ENCODE measurements at regions of chr1 and their contacts with region 1.

Region 1: DNA sequence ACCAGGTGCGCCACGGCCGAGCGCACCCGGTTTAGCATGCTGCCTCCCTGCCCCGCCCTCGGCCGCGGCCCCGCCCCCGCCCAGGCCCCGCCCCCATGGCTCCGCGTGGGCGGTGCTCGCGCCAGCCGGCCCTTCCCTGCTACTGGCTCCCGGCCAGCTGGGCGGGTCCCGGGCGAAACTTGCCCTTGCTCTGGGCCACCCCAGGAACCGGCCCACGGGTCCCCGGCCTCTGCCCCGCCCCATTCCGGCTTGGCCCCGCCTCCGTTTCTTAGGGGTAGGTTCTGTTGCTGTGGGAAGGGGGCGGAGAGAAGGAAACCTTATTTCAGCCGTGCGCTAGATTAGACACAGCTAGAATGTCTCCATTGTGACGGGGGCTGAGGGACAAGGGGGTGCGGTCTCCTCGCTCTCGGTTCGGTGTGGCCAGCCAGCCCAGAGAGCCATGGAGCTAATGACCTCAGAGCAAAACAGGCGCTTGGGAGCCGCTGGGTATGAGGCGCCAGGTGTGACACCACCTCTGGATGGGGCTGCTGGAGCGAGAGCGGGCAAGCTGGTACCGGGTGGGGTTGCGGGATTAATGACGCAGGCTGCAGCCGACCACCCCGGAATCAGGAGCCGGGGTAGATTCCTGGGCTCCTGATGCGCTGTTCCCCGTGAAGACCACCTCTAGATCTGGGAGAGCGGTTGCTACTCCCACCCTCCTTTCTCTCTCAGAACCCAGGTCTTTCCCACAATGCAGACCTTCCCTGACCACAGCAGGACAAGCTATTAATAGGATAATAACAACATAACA is at the start of gene PPM1J:
- DNase-seq: peak; percentile 97
- H3K4me3 ChIP-seq: peak within 1 kb of the TSS; percentile 40 to 45 (median 42)
- H3K27ac ChIP-seq: no peak within 1 kb of the TSS
- H3K4me1 ChIP-seq: peaks cover 11% of the 10 kb centered on the region
- H3K27me3 ChIP-seq: no peaks in the 10 kb centered on the region
- CTCF ChIP-seq: no peak
- POLR2A ChIP-seq: no peak
- total RNA-seq, gene PPM1J: 1.7 and 2.4 TPM in 2 replicates

Region 2: DNA sequence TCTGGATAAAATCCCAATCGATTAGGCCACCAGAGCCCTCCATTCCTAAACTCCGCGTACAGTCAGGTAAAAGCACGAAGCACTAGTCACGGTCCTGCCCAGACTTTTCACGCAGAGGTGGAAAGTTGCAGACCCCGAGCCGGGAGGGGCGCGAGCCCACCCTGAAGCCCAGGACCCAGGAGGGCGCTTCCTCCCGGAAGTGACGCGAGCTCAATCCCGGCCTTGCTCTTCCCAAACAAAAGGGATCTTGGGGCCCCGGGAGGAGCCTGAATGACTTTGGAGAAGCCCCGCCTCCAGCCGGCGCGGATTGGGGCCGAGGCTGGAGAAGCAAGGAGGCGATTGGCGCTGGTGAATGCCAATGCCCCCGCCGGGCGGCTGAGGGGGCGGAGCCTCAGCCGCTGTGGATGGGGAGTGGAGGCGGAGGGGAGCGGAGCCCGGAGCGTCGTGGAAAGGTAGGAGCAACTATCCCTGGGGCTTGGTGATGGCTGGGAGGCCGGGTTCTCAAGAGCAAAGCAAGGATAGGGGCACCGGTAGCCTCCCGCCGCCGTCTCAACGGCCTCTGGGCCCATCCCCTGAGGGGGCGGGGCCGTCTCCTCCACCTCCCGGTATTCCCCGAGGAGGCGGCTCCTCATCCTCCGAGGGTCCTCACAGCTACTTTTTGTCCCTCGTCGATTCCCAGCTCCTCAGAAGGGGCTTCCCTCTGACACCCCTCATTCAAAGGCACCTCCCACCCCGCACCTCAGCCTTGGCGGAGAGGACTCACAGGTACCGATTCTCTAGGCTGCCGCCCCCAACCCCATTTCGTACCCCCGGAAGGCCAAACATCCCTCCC is 319.4 kb before region 1 on chr1 and contains the start of gene CTTNBP2NL:
- CTCF ChIA-PET with region 1: interaction called, 12 read pairs
- POLR2A ChIA-PET with region 1: interaction called, 4 read pairs
- dilution Hi-C with region 1: no loop called
- intact Hi-C with region 1: no loop called
- DNase-seq: peak; percentile 95
- H3K4me3 ChIP-seq: peak within 1 kb of the TSS; percentile 86 to 94 (median 91)
- H3K27ac ChIP-seq: peak within 1 kb of the TSS; percentile 97
- H3K4me1 ChIP-seq: peaks cover 64% of the 10 kb centered on the region
- H3K27me3 ChIP-seq: no peaks in the 10 kb centered on the region
- CTCF ChIP-seq: no peak
- POLR2A ChIP-seq: peak; percentile 91
- total RNA-seq, gene CTTNBP2NL: 94.4 and 96.4 TPM in 2 replicates

Region 3: GRCh38 chr1:112794654-112795239 is 79.3 kb after region 1 on chr1:
- CTCF ChIA-PET with region 1: interaction called, 441 read pairs
- POLR2A ChIA-PET with region 1: no interaction called
- dilution Hi-C with region 1: loop called (anchors 5 kb)
- intact Hi-C with region 1: no loop called
- DNase-seq: no peak
- H3K4me3 ChIP-seq: no peak overlapping the region
- H3K27ac ChIP-seq: no peak overlapping the region
- H3K4me1 ChIP-seq: no peaks in the 10 kb centered on the region
- H3K27me3 ChIP-seq: peaks cover 0 to 2% of the 10 kb centered on the region in 2 experiments
- CTCF ChIP-seq: no peak
- POLR2A ChIP-seq: no peak

Region 4: GRCh38 chr1:112955781-112956543 is 240.5 kb after region 1 on chr1 and contains the start of gene SLC16A1:
- CTCF ChIA-PET with region 1: interaction called, 4 read pairs
- POLR2A ChIA-PET with region 1: interaction called, 3 read pairs
- dilution Hi-C with region 1: no loop called
- intact Hi-C with region 1: loop called (anchors 1 kb)
- DNase-seq: peak; percentile 96
- H3K4me3 ChIP-seq: peak within 1 kb of the TSS; percentile 91 to 99 (median 97)
- H3K27ac ChIP-seq: peak within 1 kb of the TSS; percentile 89
- H3K4me1 ChIP-seq: peaks cover 42% of the 10 kb centered on the region
- H3K27me3 ChIP-seq: no peaks in the 10 kb centered on the region
- CTCF ChIP-seq: peak in 1 of 2 donors; percentile 35
- POLR2A ChIP-seq: peak; percentile 99
- total RNA-seq, gene SLC16A1: 117 and 148 TPM in 2 replicates

Region 5: DNA sequence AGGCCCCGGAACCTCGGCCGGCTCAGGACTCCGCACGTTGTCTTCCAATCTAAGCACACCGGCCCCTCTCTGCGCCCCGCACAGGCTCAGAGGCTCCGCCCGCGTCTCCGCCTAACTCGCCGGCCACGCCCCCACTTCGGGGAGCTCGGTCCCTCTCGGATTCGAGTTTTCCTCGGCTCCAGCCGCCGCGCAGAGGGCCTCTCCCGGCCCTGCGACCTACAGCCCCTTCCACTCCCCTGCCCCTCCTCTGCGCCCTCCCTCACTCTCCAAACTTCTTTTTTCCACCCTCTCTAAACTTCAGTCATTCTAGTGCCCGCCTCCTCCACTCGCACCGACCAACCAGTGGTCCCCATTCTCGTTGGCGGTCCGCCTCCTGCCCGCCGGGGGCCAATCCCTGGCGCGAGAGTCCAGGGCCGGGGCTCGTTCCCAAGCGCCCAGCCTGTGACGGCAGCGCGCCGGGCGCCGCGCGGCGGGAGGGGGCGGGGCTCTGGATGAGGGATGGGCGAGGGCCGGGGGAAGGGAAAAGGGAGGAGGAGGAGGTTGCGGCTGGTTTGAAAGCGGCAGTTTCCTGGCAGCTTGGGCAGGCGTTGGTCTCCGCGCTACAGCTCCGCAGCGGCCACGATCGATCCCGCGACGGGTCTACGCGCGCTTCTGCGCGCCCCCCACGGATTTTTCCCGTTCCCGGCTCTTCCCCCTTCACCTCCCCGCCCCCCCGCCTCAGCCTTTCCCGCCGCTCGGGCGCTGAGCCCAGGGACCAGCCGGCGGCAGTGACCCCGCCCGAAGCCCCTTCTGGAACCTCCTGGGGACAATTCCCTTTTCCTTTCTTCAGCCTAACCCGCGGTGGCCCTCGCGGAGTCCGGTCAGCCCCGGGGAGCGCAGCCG is 674.7 kb after region 1 on chr1 and contains the start of gene MAGI3:
- CTCF ChIA-PET with region 1: no interaction called
- POLR2A ChIA-PET with region 1: no interaction called
- dilution Hi-C with region 1: no loop called
- intact Hi-C with region 1: loop called (anchors 1 kb)
- DNase-seq: peak; percentile 99
- H3K4me3 ChIP-seq: peak within 1 kb of the TSS; percentile 72 to 89 (median 88)
- H3K27ac ChIP-seq: peak within 1 kb of the TSS; percentile 75
- H3K4me1 ChIP-seq: peaks cover 14% of the 10 kb centered on the region
- H3K27me3 ChIP-seq: no peaks in the 10 kb centered on the region
- CTCF ChIP-seq: no peak
- POLR2A ChIP-seq: peak; percentile 42
- total RNA-seq, gene MAGI3: 13.9 and 16.1 TPM in 2 replicates

Region 6: GRCh38 chr1:113978863-113979702 is 1263.6 kb after region 1 on chr1 and contains the start of gene OLFML3:
- CTCF ChIA-PET with region 1: no interaction called
- POLR2A ChIA-PET with region 1: no interaction called
- dilution Hi-C with region 1: no loop called
- intact Hi-C with region 1: loop called (anchors 5 kb)
- DNase-seq: peak; percentile 86
- H3K4me3 ChIP-seq: no peak within 1 kb of the TSS
- H3K27ac ChIP-seq: peak within 1 kb of the TSS; percentile 44
- H3K4me1 ChIP-seq: peaks cover 46% of the 10 kb centered on the region
- H3K27me3 ChIP-seq: no peaks in the 10 kb centered on the region
- CTCF ChIP-seq: peak; percentile 60 to 64
- POLR2A ChIP-seq: no peak
- total RNA-seq, gene OLFML3: 1.7 and 3.4 TPM in 2 replicates